Activated B cell treated with CpG ODN at 0.5 μM for 24 hours (primary cell): ENCODE measurements at regions of chr2 and their contacts with region 1.

Region 1: GRCh38 chr2:191020221-191020741 is 6.3 kb upstream of the STAT1 start:
- DNase-seq: peak; percentile 97
- ATAC-seq: peak; percentile 83
- H3K4me3 Mint-ChIP-seq: no peak overlapping the region
- H3K27ac Mint-ChIP-seq: no peak overlapping the region
- H3K4me1 Mint-ChIP-seq: peaks cover 10% of the 10 kb centered on the region
- H3K27me3 Mint-ChIP-seq: no peaks in the 10 kb centered on the region
- CTCF ChIP-seq: no peak

Region 2: DNA sequence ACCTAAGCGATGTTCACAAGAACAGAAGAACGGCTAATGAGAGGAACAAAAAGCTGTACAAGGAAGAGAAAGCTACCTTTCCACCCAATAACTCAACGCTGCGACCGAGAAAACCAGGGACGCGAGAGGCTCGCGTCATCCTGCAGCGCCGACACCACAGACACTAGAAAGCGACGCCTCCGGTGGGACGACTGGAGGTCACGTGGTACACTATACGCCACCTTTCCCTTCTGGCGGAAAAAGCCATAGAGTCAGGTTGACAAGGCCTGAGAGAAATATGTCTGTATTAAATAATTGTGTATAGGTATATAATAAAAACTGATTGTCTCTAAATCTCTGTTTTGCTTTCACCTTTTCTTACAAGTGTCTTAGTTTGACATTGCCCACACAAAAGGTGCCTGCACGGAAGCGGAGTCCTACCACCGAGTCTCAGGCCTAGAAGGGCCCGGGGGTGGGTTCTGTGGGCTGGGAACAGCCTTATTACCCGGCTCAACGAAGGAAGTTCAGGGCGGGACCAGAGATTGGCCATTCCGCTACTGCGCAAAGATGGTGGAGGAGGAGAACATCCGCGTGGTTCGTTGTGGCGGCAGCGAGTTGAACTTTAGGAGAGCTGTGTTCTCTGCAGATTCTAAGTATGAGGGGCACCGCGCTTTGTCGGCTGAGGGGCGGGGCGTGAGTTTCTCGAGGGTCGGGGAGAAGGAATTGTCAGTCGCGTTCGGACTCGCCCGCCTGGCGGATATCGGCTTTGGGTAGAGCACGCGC is 1579.2 kb before region 1 on chr2 and contains the start of gene WDR75:
- CTCF ChIA-PET with region 1: no interaction called
- POLR2A ChIA-PET with region 1: interaction called, 3 read pairs
- intact Hi-C with region 1: loop called (anchors 2 kb)
- DNase-seq: peak; percentile 79
- ATAC-seq: peak; percentile 94
- H3K4me3 Mint-ChIP-seq: peak within 1 kb of the TSS; percentile 98
- H3K27ac Mint-ChIP-seq: peak within 1 kb of the TSS; percentile 99
- H3K4me1 Mint-ChIP-seq: peaks cover 26% of the 10 kb centered on the region
- H3K27me3 Mint-ChIP-seq: no peaks in the 10 kb centered on the region
- CTCF ChIP-seq: no peak
- total RNA-seq, gene WDR75: 53.0 and 61.2 TPM in 2 replicates

Region 3: GRCh38 chr2:190408538-190409271 is 611.6 kb before region 1 on chr2:
- CTCF ChIA-PET with region 1: no interaction called
- POLR2A ChIA-PET with region 1: no interaction called
- intact Hi-C with region 1: loop called (anchors 2 kb)
- DNase-seq: no peak
- ATAC-seq: peak; percentile 55
- H3K4me3 Mint-ChIP-seq: peak overlapping the region; percentile 84
- H3K27ac Mint-ChIP-seq: peak overlapping the region; percentile 86
- H3K4me1 Mint-ChIP-seq: peaks cover 26% of the 10 kb centered on the region
- H3K27me3 Mint-ChIP-seq: no peaks in the 10 kb centered on the region
- CTCF ChIP-seq: no peak